ENCODE measurements at regions of chrX and their contacts with region 1.

Region 1: DNA sequence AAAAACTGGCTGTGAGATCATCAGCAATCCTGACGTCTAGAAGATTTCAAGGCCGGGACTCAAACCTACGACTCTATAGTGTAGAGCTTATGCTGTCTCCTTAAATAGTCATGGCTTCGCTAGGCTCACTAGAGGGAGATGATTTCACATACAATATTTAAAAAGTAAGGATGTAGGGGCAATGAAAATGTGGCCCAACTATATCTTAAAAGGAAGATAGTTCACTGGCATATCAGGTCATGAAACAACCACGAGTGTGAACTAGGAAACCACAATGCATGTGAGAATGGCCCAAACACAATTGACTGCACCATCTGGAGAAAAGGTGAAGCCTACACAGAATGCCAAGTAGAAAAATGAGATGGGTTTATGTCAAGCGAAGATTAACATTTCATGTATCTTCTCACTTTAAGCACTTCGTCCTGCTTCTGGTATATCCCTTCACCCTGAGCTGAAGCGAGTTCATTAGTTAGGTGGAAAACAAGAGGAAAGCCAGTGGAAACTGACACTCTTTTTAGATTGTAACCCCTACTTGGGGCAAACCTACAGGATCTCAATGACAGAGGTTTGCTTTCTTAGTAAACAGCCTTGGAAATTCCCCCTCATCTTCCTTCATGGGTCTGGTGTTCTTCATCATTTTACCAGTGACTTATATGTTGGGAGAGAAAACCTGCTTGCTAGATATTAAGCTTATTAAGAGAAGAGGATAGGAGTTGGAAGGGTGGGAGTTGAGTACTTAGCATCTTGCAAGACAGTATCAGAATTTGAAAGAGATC is 17.4 kb downstream of the FAM9C start:
- DNase-seq: no peak
- H3K4me3 Mint-ChIP-seq: no peak overlapping the region
- H3K27ac Mint-ChIP-seq: peak overlapping the region; percentile 72
- H3K4me1 Mint-ChIP-seq: peaks cover 67% of the 10 kb centered on the region
- H3K27me3 Mint-ChIP-seq: no peaks in the 10 kb centered on the region

Region 2: DNA sequence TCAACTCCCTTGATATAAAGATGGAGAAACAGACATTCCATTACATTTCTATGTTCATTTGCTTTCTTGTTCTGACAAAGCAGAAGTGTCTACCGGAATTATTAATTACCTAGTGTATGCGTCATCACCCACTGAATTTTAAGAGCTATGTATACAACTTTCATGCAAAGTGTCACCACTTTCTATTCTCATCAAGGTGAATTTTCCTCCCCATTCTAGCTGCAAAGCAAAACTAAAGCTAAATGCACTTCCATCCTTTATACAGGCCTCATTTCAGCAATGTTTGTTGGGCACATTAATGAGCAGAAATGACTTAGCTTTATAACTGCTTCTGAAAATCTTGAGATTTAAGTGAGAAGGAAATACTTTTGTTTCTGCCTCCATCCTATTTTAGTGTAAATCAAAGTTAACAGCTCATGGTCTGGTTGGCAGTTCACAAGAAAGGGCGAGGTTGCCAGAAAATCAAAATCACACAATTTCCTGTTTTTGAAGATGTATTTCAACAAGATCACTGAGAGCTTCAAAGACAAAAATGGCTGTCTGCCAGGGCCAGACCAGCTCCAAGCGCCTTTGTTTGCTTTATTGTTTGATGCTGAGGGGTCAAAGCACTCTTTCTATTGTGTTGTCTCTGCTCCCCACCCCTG is 24.6 kb after region 1 on chrX:
- intact Hi-C with region 1: loop called (anchors 1 kb)
- DNase-seq: no peak
- H3K4me3 Mint-ChIP-seq: no peak overlapping the region
- H3K27ac Mint-ChIP-seq: peak overlapping the region; percentile 85
- H3K4me1 Mint-ChIP-seq: peaks cover 34% of the 10 kb centered on the region
- H3K27me3 Mint-ChIP-seq: no peaks in the 10 kb centered on the region

Region 3: DNA sequence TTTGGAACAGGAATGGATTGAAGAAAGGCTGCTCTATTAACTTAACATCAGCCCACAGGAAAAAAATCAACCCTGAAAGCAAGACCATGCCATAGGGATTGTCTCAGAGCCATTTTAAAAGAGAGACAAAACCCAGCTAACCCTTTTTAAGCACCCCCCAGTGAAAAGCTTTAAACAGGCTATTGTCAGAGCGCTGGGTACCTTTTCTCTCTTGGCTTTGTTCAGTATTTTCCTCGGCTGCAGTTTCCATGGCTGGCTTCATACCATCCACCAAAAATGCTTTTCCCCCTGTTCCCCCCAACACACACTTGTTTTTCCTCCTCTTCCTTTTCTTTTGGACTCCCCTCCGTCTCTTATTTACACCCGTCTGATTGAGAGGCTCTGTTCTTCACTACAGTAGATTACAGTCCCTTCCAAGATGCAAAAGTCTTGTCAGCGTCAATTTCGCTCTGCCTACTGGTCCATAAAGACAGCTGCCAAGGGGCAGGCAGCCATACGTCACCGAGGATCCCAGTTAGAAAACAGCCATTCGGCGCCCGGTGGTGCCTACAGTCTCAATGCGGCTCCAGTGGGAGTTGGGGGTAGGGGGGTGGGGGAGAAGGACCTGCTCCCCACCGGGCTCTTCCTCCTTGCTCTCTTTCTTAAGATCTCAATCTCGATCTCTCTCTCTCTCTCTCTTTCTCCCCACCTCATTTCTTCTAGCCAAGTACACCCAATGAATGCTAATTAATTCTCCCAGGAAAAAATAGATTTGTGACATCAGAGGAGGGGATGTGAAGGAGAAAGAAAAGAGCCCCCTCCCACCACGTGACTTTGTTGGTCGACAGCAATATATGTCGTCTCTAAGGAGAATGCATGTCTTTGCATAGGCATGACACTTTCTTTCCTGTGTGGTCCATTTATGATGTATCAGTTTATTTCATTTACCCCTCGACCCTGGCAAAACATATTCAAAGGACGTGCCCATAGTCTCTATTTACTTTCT is 789.9 kb after region 1 on chrX and contains the start of gene GPM6B:
- intact Hi-C with region 1: no loop called
- DNase-seq: no peak
- H3K4me3 Mint-ChIP-seq: no peak within 1 kb of the TSS
- H3K27ac Mint-ChIP-seq: no peak within 1 kb of the TSS
- H3K4me1 Mint-ChIP-seq: no peaks in the 10 kb centered on the region
- H3K27me3 Mint-ChIP-seq: peaks cover 16% of the 10 kb centered on the region
- total RNA-seq, gene GPM6B: not detected in 2 replicates